Activated naive CD4-positive, alpha-beta T cell treated with anti-CD3 and anti-CD28 coated beads for 36 hours (primary cell): ENCODE measurements at regions of chr12 and their contacts with region 1.

Region 1: DNA sequence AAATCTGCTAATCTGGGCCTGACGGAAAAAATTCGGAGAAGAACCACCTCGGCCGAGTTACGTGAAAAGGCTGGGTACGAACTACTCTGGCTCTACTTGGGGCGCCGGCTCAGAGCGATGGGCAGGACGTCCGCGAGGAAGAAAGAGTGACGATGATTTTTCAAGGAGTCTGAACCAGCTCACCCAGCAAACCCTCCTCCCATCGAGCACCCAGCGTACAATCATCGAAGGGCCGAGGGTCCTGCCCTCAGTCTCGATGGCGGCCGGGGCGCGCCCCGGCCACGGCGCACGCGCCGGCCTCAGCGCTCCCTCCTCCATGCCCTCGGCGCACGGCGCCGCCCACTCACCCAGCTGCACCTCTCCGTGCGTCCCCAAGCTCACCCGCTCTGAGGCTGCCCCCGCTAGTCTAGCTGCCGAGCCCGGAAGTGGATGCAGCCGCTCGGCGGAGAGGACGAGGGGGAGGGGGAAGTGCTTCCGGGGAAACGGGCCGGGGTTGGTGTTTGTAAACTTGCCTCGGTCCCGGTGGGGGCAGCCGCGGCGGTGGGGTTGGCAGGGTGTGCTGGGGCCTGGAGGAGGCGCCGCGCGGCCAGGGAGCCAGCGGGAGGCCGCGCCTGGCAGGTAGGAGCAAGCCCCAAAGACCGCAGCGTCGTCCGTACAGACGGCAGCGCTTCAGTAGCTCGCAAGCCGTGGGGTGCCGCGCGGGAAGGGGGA is at the starts of genes CSAD and ZNF740:
- DNase-seq: peak; percentile 98
- H3K4me3 Mint-ChIP-seq: peak within 1 kb of the TSS; percentile 87
- H3K27ac Mint-ChIP-seq: peak within 1 kb of the TSS; percentile 96
- H3K4me1 Mint-ChIP-seq: peaks cover 51% of the 10 kb centered on the region
- H3K27me3 Mint-ChIP-seq: no peaks in the 10 kb centered on the region
- total RNA-seq, gene CSAD: 31.5 to 32.3 TPM
- total RNA-seq, gene ZNF740: 40.4 to 42.0 TPM

Region 2: GRCh38 chr12:53005986-53006809 is 174.2 kb before region 1 on chr12 and contains the start of gene EIF4B:
- CTCF ChIA-PET with region 1: no interaction called
- intact Hi-C with region 1: loop called (anchors 1 kb)
- DNase-seq: peak; percentile 100
- H3K4me3 Mint-ChIP-seq: peak within 1 kb of the TSS; percentile 92
- H3K27ac Mint-ChIP-seq: peak within 1 kb of the TSS; percentile 93
- H3K4me1 Mint-ChIP-seq: peaks cover 47% of the 10 kb centered on the region
- H3K27me3 Mint-ChIP-seq: no peaks in the 10 kb centered on the region
- total RNA-seq, gene EIF4B: 813 to 821 TPM

Region 3: GRCh38 chr12:53159195-53159839 is 21.1 kb before region 1 on chr12:
- CTCF ChIA-PET with region 1: interaction called, 17 read pairs
- intact Hi-C with region 1: loop called (anchors 1 kb)
- DNase-seq: peak; percentile 97
- H3K4me3 Mint-ChIP-seq: no peak overlapping the region
- H3K27ac Mint-ChIP-seq: peak overlapping the region; percentile 6
- H3K4me1 Mint-ChIP-seq: peaks cover 7% of the 10 kb centered on the region
- H3K27me3 Mint-ChIP-seq: no peaks in the 10 kb centered on the region

Region 4: GRCh38 chr12:53213348-53213747 is 33.0 kb after region 1 on chr12:
- CTCF ChIA-PET with region 1: interaction called, 11 read pairs
- intact Hi-C with region 1: no loop called
- DNase-seq: peak; percentile 89
- H3K4me3 Mint-ChIP-seq: no peak overlapping the region
- H3K27ac Mint-ChIP-seq: peak overlapping the region; percentile 33
- H3K4me1 Mint-ChIP-seq: peaks cover 42% of the 10 kb centered on the region
- H3K27me3 Mint-ChIP-seq: no peaks in the 10 kb centered on the region

Region 5: DNA sequence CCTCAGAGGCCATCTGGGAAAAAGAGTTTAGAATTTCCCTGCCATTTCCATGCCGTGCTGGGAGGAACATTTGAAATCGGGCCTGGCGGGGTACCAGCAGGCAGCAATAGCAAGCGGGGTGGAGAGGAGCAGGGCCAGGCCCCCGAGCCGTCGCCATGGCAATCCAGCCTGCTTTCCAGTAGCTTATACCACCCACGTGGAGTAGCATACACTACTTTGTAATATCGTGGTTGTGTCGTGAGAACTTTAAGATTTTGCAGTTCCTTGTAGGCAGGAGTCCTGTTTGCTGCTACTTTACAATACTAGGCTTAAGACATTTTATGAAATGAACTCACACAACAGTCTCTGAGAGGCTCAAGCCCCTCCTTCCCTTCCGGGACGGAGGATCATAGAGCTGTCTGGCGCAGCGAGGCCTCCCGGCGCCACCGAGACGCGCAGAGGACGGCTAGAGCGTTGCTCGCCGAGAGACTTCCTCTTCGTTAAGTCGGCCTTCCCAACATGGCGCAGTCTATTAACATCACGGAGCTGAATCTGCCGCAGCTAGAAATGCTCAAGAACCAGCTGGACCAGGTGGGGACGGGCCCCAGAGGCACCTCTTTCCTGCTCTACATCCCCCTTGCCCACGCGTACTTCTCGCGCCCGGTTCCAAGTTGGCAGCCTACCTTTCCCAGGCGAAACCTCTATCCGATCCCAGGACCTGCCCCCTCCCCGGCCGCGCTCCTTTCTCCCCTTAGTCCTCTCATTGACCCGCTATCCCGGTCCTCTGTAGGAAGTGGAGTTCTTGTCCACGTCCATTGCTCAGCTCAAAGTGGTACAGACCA is 114.9 kb after region 1 on chr12 and contains the start of gene PFDN5:
- CTCF ChIA-PET with region 1: interaction called, 4 read pairs
- intact Hi-C with region 1: loop called (anchors 1 kb)
- DNase-seq: peak; percentile 94
- H3K4me3 Mint-ChIP-seq: peak within 1 kb of the TSS; percentile 98
- H3K27ac Mint-ChIP-seq: peak within 1 kb of the TSS; percentile 95
- H3K4me1 Mint-ChIP-seq: peaks cover 53% of the 10 kb centered on the region
- H3K27me3 Mint-ChIP-seq: no peaks in the 10 kb centered on the region
- total RNA-seq, gene PFDN5: 376 to 383 TPM

Region 6: GRCh38 chr12:53675651-53676453 is 495.5 kb after region 1 on chr12 and contains the start of gene ATP5MC2:
- CTCF ChIA-PET with region 1: no interaction called
- intact Hi-C with region 1: loop called (anchors 10 kb)
- DNase-seq: peak; percentile 98
- H3K4me3 Mint-ChIP-seq: peak within 1 kb of the TSS; percentile 95
- H3K27ac Mint-ChIP-seq: peak within 1 kb of the TSS; percentile 91
- H3K4me1 Mint-ChIP-seq: peaks cover 32% of the 10 kb centered on the region
- H3K27me3 Mint-ChIP-seq: peaks cover 13% of the 10 kb centered on the region
- total RNA-seq, gene ATP5MC2: 443 to 466 TPM